HepG2 (cell line): ENCODE measurements at regions of chr1 and their contacts with region 1.

Region 1: DNA sequence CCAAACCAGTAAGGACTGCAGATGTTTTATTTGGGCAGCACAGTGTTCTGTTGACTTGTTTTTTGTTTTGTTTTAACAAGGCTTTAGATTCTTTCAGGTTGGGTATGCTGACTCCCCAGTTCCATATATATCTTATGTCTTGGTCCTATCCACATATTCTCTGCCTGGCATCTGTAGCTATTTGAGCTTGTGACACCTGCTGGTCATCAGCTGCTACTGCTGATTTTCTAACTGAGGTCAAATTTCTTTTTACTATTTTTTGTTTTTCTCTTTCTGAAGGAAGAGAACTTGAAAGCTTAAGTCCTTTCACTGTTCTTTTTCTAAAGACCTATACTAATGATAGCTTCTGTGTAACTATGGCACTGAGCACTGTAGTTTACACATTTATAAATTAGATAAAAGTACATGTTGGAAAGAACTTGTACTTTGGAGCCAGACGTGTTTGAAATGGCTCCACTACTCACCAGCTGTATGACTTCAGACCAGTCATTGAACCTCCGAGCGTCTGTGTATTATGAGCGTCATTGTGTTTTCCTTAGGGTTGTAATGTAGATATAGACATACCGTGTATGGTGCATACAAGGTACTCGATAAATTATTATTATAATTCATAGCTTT is 109.4 kb downstream of the NRDC start:
- DNase-seq: peak; percentile 58
- ATAC-seq: peak; percentile 82
- H3K4me3 ChIP-seq: no peak overlapping the region
- H3K27ac ChIP-seq: no peak overlapping the region
- H3K4me1 ChIP-seq: no peaks in the 10 kb centered on the region; the same call in 1 of the 2 replicates
- H3K27me3 ChIP-seq: no peaks in the 10 kb centered on the region
- CTCF ChIP-seq: peak; percentile 70
- EP300 ChIP-seq: no peak
- POLR2A ChIP-seq: no peak
- RAD21 ChIP-seq: peak; percentile 62; the same call in 1 of the 2 replicates

Region 2: GRCh38 chr1:51569284-51570062 is 199.6 kb before region 1 on chr1:
- CTCF ChIA-PET with region 1: interaction called, 3 read pairs
- POLR2A ChIA-PET with region 1: no interaction called
- in situ Hi-C with region 1: no loop called
- intact Hi-C with region 1: loop called (anchors 1 kb)
- DNase-seq: peak; percentile 16
- ATAC-seq: peak; percentile 63
- H3K4me3 ChIP-seq: no peak overlapping the region
- H3K27ac ChIP-seq: no peak overlapping the region
- H3K4me1 ChIP-seq: peaks cover 14% of the 10 kb centered on the region
- H3K27me3 ChIP-seq: no peaks in the 10 kb centered on the region
- CTCF ChIP-seq: peak; percentile 44
- EP300 ChIP-seq: no peak
- POLR2A ChIP-seq: no peak
- RAD21 ChIP-seq: no peak

Region 3: GRCh38 chr1:51627678-51628077 is 141.4 kb before region 1 on chr1:
- CTCF ChIA-PET with region 1: interaction called, 20 read pairs
- POLR2A ChIA-PET with region 1: no interaction called
- in situ Hi-C with region 1: loop called (anchors 5 kb)
- intact Hi-C with region 1: loop called (anchors 2 kb)
- DNase-seq: peak; percentile 49
- ATAC-seq: peak; percentile 67; the same call in 2 of the 3 replicates
- H3K4me3 ChIP-seq: no peak overlapping the region
- H3K27ac ChIP-seq: no peak overlapping the region
- H3K4me1 ChIP-seq: peaks cover 8% of the 10 kb centered on the region
- H3K27me3 ChIP-seq: no peaks in the 10 kb centered on the region
- CTCF ChIP-seq: peak; percentile 54
- EP300 ChIP-seq: no peak
- POLR2A ChIP-seq: no peak
- RAD21 ChIP-seq: peak; percentile 74

Region 4: GRCh38 chr1:51829058-51829457 is 60.0 kb after region 1 on chr1:
- CTCF ChIA-PET with region 1: no interaction called
- POLR2A ChIA-PET with region 1: no interaction called
- in situ Hi-C with region 1: no loop called
- intact Hi-C with region 1: no loop called
- DNase-seq: no peak
- ATAC-seq: no peak
- H3K4me3 ChIP-seq: no peak overlapping the region
- H3K27ac ChIP-seq: no peak overlapping the region
- H3K4me1 ChIP-seq: no peaks in the 10 kb centered on the region
- H3K27me3 ChIP-seq: no peaks in the 10 kb centered on the region
- CTCF ChIP-seq: no peak
- EP300 ChIP-seq: no peak
- POLR2A ChIP-seq: no peak
- RAD21 ChIP-seq: no peak